HCT116 (cell line): ENCODE measurements at regions of chr20 and their contacts with region 1.

Region 1: GRCh38 chr20:29443819-29444218 is 1813.6 kb upstream of the DEFB115 start:
- DNase-seq: no peak
- ATAC-seq: no peak
- H3K4me3 ChIP-seq: no peak overlapping the region
- H3K27ac ChIP-seq: no peak overlapping the region
- H3K4me1 ChIP-seq: no peaks in the 10 kb centered on the region
- H3K27me3 ChIP-seq: peaks cover 4% of the 10 kb centered on the region; the same call in 1 of the 2 replicates
- CTCF ChIP-seq: no peak
- POLR2A ChIP-seq: no peak
- RAD21 ChIP-seq: no peak

Region 2: DNA sequence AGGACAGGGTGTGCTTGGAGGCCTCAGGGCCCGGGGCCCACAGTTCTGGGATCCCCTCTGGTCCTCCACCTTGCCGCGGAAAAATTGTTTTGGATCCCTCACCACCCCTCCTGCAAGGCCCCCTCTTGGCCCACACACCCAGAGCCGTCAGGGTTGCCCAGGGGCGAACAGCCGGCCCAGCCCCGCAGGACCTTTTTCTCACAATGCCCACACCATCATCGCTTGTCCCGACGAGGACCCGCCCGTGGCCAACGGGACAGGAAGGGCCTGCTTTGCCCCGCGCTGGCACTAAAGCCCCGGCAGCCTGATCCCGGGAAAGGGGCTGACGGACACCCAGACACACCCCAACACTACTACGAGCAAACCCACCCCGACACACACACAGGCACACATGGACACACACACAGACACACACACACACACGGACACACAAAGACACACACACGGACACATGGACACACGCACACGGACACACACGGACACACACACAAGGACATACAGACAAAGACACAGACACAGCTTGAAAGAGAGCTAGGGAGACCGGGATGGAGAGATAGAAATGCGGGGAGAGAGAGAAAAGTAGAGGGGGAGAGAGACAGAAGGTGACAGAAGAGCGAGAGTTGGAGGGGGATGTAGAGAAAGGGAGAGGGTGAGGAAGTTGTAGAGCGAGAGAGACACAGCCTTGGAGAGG is 320.1 kb after region 1 on chr20:
- CTCF ChIA-PET with region 1: no interaction called
- POLR2A ChIA-PET with region 1: no interaction called
- RAD21 ChIA-PET with region 1: no interaction called
- intact Hi-C with region 1: loop called (anchors 1 kb)
- DNase-seq: no peak
- ATAC-seq: no peak
- H3K4me3 ChIP-seq: no peak overlapping the region
- H3K27ac ChIP-seq: no peak overlapping the region
- H3K4me1 ChIP-seq: no peaks in the 10 kb centered on the region
- H3K27me3 ChIP-seq: no peaks in the 10 kb centered on the region
- CTCF ChIP-seq: no peak
- POLR2A ChIP-seq: no peak
- RAD21 ChIP-seq: no peak